Natural killer cell (primary cell): ENCODE measurements at regions of chr13 and their contacts with region 1.

Region 1: GRCh38 chr13:68275758-68276157 is 1045.6 kb upstream of the PCDH9 start:
- DNase-seq: no peak
- ATAC-seq: no peak
- H3K4me3 ChIP-seq: no peak overlapping the region
- H3K4me3 Mint-ChIP-seq: no peak overlapping the region
- H3K27ac ChIP-seq: no peak overlapping the region
- H3K27ac Mint-ChIP-seq: no peak overlapping the region
- H3K4me1 ChIP-seq: no peaks in the 10 kb centered on the region
- H3K4me1 Mint-ChIP-seq: no peaks in the 10 kb centered on the region
- H3K27me3 ChIP-seq: no peaks in the 10 kb centered on the region
- H3K27me3 Mint-ChIP-seq: no peaks in the 10 kb centered on the region
- CTCF ChIP-seq: no peak

Region 2: DNA sequence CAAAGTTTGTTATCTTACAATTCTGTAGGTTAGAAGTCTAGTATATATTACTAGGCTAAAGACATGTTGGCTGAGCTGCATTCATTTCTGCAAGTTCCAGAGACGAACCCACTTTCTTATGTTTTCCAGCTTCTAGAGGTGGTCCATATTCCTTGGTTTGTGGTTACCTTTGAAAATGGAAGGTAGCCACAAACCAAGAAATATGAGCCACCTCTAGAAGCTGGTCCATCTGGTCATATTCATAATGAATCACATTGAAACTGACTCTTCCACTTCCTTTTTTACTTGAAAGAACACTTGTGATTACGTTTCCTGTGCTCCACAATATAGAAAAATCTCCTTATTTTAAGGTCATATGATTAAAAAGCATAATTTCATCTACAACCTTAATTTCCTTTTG is 102.6 kb before region 1 on chr13:
- intact Hi-C with region 1: no loop called
- DNase-seq: no peak
- ATAC-seq: no peak
- H3K4me3 ChIP-seq: no peak overlapping the region
- H3K4me3 Mint-ChIP-seq: no peak overlapping the region
- H3K27ac ChIP-seq: no peak overlapping the region
- H3K27ac Mint-ChIP-seq: no peak overlapping the region
- H3K4me1 ChIP-seq: no peaks in the 10 kb centered on the region
- H3K4me1 Mint-ChIP-seq: no peaks in the 10 kb centered on the region
- H3K27me3 ChIP-seq: no peaks in the 10 kb centered on the region
- H3K27me3 Mint-ChIP-seq: no peaks in the 10 kb centered on the region
- CTCF ChIP-seq: no peak

Region 3: GRCh38 chr13:68304286-68304893 is 28.6 kb after region 1 on chr13:
- intact Hi-C with region 1: loop called (anchors 1 kb)
- DNase-seq: no peak
- ATAC-seq: no peak
- H3K4me3 ChIP-seq: no peak overlapping the region
- H3K4me3 Mint-ChIP-seq: no peak overlapping the region
- H3K27ac ChIP-seq: no peak overlapping the region
- H3K27ac Mint-ChIP-seq: no peak overlapping the region
- H3K4me1 ChIP-seq: no peaks in the 10 kb centered on the region
- H3K4me1 Mint-ChIP-seq: no peaks in the 10 kb centered on the region
- H3K27me3 ChIP-seq: no peaks in the 10 kb centered on the region
- H3K27me3 Mint-ChIP-seq: no peaks in the 10 kb centered on the region
- CTCF ChIP-seq: no peak